ENCODE measurements at regions of chr1 and their contacts with region 1.

Region 1: DNA sequence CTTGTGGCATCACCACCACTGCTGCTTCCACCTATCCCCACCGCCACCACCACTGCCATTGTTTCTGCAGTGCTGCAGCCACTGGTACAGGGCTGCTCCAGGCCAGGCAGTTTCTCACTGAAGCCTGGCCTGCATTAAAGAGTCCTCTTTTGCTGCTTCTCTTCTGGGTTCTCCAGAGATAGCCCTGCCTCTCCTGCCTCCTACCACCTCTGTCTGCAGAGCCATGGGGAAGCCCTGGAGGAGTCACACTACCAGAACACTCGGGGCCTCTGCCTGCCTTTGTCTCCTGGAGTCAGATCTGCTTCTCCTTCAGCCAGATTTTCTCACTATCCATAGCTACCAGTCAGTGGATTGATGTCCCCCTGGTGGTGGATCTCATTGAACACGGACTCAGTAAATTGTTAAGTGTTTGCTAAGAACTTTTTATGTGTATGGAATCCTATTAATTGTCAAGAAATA is 37.7 kb upstream of the DDAH1 start:
- DNase-seq: peak; percentile 3 to 59
- H3K4me3 ChIP-seq: no peak overlapping the region
- H3K27ac ChIP-seq: no peak overlapping the region
- H3K4me1 ChIP-seq: no peaks in the 10 kb centered on the region
- H3K27me3 ChIP-seq: peaks cover 0 to 2% (median 0%) of the 10 kb centered on the region in 4 experiments; a peak in 1 of 7 replicates
- CTCF ChIP-seq: peak in 2 of 3 experiments; percentile 59 to 66; a peak in 3 of 4 replicates
- EP300 ChIP-seq: no peak
- POLR2A ChIP-seq: no peak
- RAD21 ChIP-seq: peak; percentile 62 to 72

Region 2: GRCh38 chr1:85464497-85465098 is 38.1 kb before region 1 on chr1:
- CTCF ChIA-PET with region 1: interaction called, 15 read pairs
- POLR2A ChIA-PET with region 1: no interaction called
- DNase-seq: peak; percentile 34 to 83
- H3K4me3 ChIP-seq: peak overlapping the region; percentile 62 to 87 (median 62)
- H3K27ac ChIP-seq: no peak overlapping the region
- H3K4me1 ChIP-seq: peaks cover 0 to 10% (median 3%) of the 10 kb centered on the region in 4 experiments; a peak in 6 of 7 replicates
- H3K27me3 ChIP-seq: peaks cover 0 to 23% (median 16%) of the 10 kb centered on the region in 4 experiments; a peak in 6 of 7 replicates
- CTCF ChIP-seq: no peak
- EP300 ChIP-seq: no peak
- POLR2A ChIP-seq: no peak; a peak in 1 of 3 replicates
- RAD21 ChIP-seq: no peak

Region 3: DNA sequence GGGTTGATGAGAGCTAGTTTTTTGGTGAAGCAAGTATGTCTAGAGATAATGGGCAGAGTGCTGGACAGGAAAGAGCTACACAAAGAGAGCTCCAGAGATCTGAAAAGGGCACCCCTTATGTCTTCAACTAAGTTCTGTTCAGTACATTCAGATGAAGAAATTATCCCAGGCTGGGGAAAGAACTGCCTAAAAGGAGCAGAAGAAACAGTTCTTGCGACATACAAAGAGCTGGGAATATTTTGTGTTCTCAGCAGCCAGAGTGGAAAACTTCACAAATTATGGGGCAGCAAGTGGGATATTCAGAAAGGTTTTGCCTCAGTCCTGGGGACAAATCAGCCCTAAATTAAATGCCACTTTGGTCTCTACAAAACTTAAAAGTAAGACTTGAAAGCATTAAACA is 60.5 kb after region 1 on chr1:
- CTCF ChIA-PET with region 1: no interaction called
- POLR2A ChIA-PET with region 1: no interaction called
- DNase-seq: no peak
- H3K4me3 ChIP-seq: no peak overlapping the region
- H3K27ac ChIP-seq: no peak overlapping the region
- H3K4me1 ChIP-seq: no peaks in the 10 kb centered on the region
- H3K27me3 ChIP-seq: no peaks in the 10 kb centered on the region
- CTCF ChIP-seq: no peak
- EP300 ChIP-seq: no peak
- POLR2A ChIP-seq: no peak
- RAD21 ChIP-seq: no peak

Region 4: DNA sequence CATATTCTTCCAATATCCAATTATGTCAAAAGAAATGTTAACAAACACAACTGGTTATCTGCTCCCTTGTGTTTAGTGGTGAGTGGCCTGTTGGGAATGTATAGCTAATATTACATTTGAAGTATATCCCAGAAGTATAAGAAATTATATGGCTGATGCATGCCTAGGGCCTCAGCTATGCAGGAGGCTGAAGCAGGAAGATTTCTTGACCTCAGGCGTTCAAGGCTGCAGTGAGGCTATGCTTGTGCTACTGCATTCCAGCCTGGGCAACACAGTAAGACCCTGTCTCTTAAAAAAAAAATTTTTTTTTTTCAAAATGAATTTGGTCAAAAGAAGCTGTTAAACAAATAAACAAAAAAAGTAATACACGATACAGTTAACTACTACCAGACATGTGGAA is 168.5 kb after region 1 on chr1:
- CTCF ChIA-PET with region 1: no interaction called
- POLR2A ChIA-PET with region 1: no interaction called
- DNase-seq: no peak
- H3K4me3 ChIP-seq: no peak overlapping the region
- H3K27ac ChIP-seq: no peak overlapping the region
- H3K4me1 ChIP-seq: no peaks in the 10 kb centered on the region; a peak in 1 of 7 replicates
- H3K27me3 ChIP-seq: peaks cover 0 to 1% (median 0%) of the 10 kb centered on the region in 4 experiments; a peak in 1 of 7 replicates
- CTCF ChIP-seq: no peak
- EP300 ChIP-seq: no peak
- POLR2A ChIP-seq: no peak
- RAD21 ChIP-seq: no peak

Measured in H1 (cell line).